ENCODE measurements at regions of chr14 and their contacts with region 1.

Region 1: GRCh38 chr14:68788996-68789820 is 3.7 kb downstream of the ZFP36L1 start:
- DNase-seq: peak; percentile 74
- ATAC-seq: 0 out of 2 replicates have a peak, but pooled peaks have one; percentile 6
- H3K4me3 ChIP-seq: peak overlapping the region; percentile 97
- H3K27ac ChIP-seq: peak overlapping the region; percentile 98
- H3K4me1 ChIP-seq: peaks cover 2% of the 10 kb centered on the region; the same call in 1 of the 2 replicates
- H3K27me3 ChIP-seq: no peaks in the 10 kb centered on the region
- CTCF ChIP-seq: peak; percentile 89
- POLR2A ChIP-seq: no peak
- RAD21 ChIP-seq: peak; percentile 94

Region 2: GRCh38 chr14:68174446-68174845 is 614.8 kb before region 1 on chr14:
- CTCF ChIA-PET with region 1: no interaction called
- POLR2A ChIA-PET with region 1: interaction called, 13 read pairs
- dilution Hi-C with region 1: no loop called
- in situ Hi-C with region 1: no loop called
- intact Hi-C with region 1: no loop called
- DNase-seq: peak; percentile 55
- ATAC-seq: no peak
- H3K4me3 ChIP-seq: no peak overlapping the region
- H3K27ac ChIP-seq: no peak overlapping the region
- H3K4me1 ChIP-seq: peaks cover 11% of the 10 kb centered on the region
- H3K27me3 ChIP-seq: no peaks in the 10 kb centered on the region
- CTCF ChIP-seq: no peak
- POLR2A ChIP-seq: no peak
- RAD21 ChIP-seq: no peak

Region 3: DNA sequence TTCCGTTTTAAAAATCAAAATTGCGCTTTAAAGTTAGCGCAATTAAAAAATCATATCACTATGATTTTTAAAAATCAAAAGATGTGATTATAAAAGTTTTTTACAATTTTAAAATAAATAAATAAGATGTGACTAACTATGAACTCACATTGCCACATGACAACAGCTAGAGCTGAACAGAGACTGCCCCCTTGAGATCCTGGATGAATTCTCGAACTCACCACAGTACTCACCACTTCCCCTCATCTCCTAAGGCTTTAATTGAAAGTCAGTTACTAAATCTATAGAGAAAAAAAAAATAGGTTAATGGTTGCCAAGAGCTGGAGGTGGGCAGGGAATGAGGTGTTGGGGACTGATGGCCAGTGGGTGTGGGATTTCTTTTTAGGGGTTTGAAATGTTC is 380.5 kb before region 1 on chr14:
- CTCF ChIA-PET with region 1: interaction called, 3 read pairs
- POLR2A ChIA-PET with region 1: interaction called, 19 read pairs
- dilution Hi-C with region 1: no loop called
- in situ Hi-C with region 1: no loop called
- intact Hi-C with region 1: no loop called
- DNase-seq: peak; percentile 48
- ATAC-seq: no peak
- H3K4me3 ChIP-seq: no peak overlapping the region
- H3K27ac ChIP-seq: no peak overlapping the region
- H3K4me1 ChIP-seq: peaks cover 17% of the 10 kb centered on the region
- H3K27me3 ChIP-seq: no peaks in the 10 kb centered on the region
- CTCF ChIP-seq: peak; percentile 33
- POLR2A ChIP-seq: no peak
- RAD21 ChIP-seq: peak; percentile 31; the same call in 1 of the 2 replicates

Region 4: DNA sequence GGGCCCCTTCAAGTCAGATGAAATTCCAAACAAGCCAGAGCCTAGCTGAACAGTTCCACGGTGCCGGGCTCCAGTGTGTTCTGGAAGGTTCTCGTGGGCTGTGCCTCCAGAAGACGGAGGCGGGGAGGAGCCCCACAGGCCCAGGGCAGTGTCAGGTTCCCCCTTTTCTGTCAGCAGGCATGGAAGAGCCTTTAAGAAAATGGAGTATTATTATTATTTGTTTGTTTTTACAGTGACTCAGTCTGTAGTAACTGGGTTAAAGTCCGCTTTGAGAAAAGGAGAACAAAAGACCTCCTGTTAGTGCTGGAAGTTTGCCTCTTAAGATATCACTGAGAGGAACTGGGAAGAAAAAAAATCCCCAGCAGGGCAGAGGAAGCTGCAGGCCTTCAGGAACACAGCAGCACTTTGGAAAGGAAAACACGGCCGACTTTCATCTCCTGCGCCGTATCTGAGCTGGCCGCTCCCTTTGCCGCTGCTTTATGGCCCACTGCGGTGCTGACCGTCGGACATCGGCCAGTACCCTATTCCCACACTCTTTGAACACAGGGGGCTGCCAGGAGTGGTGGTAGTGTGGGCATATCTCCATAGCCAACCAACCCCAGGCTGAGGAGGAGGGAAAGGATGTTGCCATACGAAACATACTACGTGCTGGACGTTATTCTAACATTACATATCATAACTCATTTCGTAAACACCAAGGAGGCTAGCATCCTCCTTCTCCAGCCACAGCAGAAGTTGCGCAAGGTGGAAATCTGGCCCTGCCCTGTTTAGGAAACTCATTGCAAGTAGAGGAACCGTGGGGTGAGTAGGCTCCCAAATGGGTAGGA is 190.4 kb before region 1 on chr14:
- CTCF ChIA-PET with region 1: no interaction called
- POLR2A ChIA-PET with region 1: interaction called, 4 read pairs
- dilution Hi-C with region 1: no loop called
- in situ Hi-C with region 1: no loop called
- intact Hi-C with region 1: loop called (anchors 5 kb)
- DNase-seq: peak; percentile 97
- ATAC-seq: peak; percentile 87
- H3K4me3 ChIP-seq: peak overlapping the region; percentile 3; the same call in 1 of the 2 replicates
- H3K27ac ChIP-seq: peak overlapping the region; percentile 97
- H3K4me1 ChIP-seq: peaks cover 25% of the 10 kb centered on the region
- H3K27me3 ChIP-seq: no peaks in the 10 kb centered on the region
- CTCF ChIP-seq: no peak
- POLR2A ChIP-seq: no peak
- RAD21 ChIP-seq: peak; percentile 29

Region 5: DNA sequence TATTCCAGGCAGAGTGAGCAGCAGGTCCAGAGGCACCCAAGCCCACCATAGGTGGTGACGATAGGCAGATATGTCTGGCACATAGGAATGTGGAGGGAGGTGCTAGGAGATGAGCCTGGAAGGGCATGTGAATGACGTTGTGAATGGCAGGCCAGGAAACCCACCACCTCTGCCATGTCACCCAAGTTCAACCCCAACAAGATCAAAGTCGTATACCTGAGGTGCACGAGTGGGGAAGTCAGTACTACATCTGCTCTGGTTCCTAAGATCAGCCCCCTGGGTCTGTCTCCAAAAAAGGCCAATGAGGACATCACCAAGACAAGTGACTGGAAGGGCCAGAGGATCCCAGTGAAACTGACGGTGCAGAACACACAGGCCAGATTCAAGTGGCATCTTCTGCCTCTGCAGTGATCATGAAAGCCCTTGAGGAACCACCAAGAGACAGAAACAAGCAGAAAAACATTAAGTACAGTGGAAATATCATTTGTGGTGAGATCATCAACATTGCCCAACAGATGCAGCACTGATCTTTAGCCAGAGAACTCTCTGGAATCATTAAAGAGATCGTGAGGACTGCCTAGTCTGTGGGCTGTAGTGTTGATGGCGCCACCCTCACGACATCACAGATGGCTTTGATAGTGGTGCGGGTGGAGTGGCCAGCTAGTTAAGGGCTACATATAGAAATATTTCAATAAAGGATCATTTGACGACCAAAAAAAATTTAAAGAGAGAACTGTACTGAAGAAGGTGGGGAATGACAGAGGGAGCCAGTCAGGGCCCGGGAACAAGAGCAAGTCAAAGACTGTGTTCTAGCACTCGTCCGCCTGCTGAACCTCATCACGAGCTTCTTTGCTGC is 96.1 kb before region 1 on chr14:
- CTCF ChIA-PET with region 1: interaction called, 3 read pairs
- POLR2A ChIA-PET with region 1: interaction called, 12 read pairs
- dilution Hi-C with region 1: no loop called
- in situ Hi-C with region 1: no loop called
- intact Hi-C with region 1: loop called (anchors 5 kb)
- DNase-seq: peak; percentile 82
- ATAC-seq: peak; percentile 7; the same call in 1 of the 2 replicates
- H3K4me3 ChIP-seq: no peak overlapping the region
- H3K27ac ChIP-seq: peak overlapping the region; percentile 6; the same call in 1 of the 2 replicates
- H3K4me1 ChIP-seq: peaks cover 42% of the 10 kb centered on the region
- H3K27me3 ChIP-seq: no peaks in the 10 kb centered on the region
- CTCF ChIP-seq: no peak
- POLR2A ChIP-seq: no peak
- RAD21 ChIP-seq: no peak

Measured in IMR-90 (cell line).